ENCODE measurements at regions of chr17 and their contacts with region 1.

Region 1: GRCh38 chr17:67475236-67475937 is 98.3 kb downstream of the PITPNC1 start:
- DNase-seq: no peak
- H3K4me3 ChIP-seq: no peak overlapping the region
- H3K27ac ChIP-seq: no peak overlapping the region
- H3K27me3 ChIP-seq: no peaks in the 10 kb centered on the region
- CTCF ChIP-seq: peak; percentile 88

Region 2: DNA sequence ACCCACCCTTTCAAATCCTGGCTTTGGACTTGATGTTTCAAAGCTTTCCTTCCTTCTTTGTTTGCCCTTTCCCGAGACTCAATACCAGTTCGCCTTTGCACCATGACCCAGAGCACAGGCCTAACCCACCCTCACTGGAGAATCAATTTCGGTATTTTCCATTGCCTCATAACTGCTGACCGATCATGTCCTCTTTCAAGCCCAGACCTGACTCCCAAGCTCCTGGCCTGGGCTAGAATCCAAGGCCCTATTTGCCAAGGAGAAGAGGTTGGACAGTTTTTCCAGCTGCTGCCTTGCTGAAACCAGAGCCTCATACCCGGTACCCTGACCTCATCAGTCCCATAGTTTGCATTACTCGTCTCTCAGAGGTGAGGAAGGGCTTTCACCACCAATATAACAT is 195.1 kb before region 1 on chr17:
- CTCF ChIA-PET with region 1: no interaction called
- POLR2A ChIA-PET with region 1: no interaction called
- DNase-seq: no peak
- H3K4me3 ChIP-seq: no peak overlapping the region
- H3K27ac ChIP-seq: no peak overlapping the region
- H3K27me3 ChIP-seq: no peaks in the 10 kb centered on the region
- CTCF ChIP-seq: no peak

Region 3: GRCh38 chr17:67461228-67461780 is 14.1 kb before region 1 on chr17:
- CTCF ChIA-PET with region 1: interaction called, 21 read pairs
- POLR2A ChIA-PET with region 1: no interaction called
- DNase-seq: no peak
- H3K4me3 ChIP-seq: no peak overlapping the region
- H3K27ac ChIP-seq: no peak overlapping the region
- H3K27me3 ChIP-seq: no peaks in the 10 kb centered on the region
- CTCF ChIP-seq: no peak

Region 4: GRCh38 chr17:67602956-67603355 is 127.6 kb after region 1 on chr17:
- CTCF ChIA-PET with region 1: no interaction called
- POLR2A ChIA-PET with region 1: no interaction called
- DNase-seq: no peak
- H3K4me3 ChIP-seq: no peak overlapping the region
- H3K27ac ChIP-seq: no peak overlapping the region
- H3K27me3 ChIP-seq: no peaks in the 10 kb centered on the region
- CTCF ChIP-seq: peak; percentile 49

Measured in AG04450 (cell line).